Activated CD8-positive, alpha-beta T cell treated with anti-CD3 and anti-CD28 coated beads for 36 hours (primary cell): ENCODE measurements at regions of chr2 and their contacts with region 1.

Region 1: DNA sequence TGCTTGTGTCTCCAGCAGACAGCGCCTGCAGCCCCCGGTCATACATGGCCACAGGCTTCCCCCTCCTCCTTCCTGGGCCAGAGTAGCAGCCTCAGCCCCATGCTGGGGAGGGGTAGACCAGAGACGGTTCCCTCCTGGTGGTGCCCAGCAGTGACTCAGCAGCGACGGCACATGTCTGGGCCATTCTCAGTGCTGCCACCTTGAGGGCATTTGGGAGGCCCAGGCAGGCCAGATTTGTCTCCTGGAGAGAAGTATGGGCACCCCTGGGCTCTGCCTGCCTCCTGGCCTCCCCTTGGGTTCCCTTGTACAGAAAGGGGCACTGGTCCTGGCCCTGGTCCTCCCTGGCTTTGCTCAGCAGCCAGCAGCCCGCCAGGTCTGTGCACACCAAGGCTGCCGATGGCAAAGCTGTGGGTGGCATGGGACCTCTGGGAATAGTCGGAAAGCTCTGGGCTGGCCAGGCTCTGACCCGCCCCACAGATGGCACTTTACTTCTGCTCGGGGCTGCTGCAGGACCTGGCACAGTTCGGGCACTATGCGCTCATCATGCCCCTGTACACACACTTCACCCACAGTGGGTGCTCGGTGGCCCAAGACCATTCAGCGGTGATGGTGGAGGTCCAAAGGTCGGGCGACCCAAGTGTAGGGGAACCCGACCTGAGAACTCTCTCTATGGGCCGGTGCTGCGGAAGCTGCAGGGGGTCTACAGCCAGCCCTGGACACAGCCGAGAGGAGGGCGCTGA is 11.4 kb upstream of the ALPI start:
- DNase-seq: peak; percentile 85
- ATAC-seq: peak; percentile 74
- H3K4me3 Mint-ChIP-seq: no peak overlapping the region
- H3K27ac Mint-ChIP-seq: no peak overlapping the region
- H3K4me1 Mint-ChIP-seq: peaks cover 17% of the 10 kb centered on the region
- H3K27me3 Mint-ChIP-seq: peaks cover 1% of the 10 kb centered on the region
- CTCF ChIP-seq: peak; percentile 61

Region 2: DNA sequence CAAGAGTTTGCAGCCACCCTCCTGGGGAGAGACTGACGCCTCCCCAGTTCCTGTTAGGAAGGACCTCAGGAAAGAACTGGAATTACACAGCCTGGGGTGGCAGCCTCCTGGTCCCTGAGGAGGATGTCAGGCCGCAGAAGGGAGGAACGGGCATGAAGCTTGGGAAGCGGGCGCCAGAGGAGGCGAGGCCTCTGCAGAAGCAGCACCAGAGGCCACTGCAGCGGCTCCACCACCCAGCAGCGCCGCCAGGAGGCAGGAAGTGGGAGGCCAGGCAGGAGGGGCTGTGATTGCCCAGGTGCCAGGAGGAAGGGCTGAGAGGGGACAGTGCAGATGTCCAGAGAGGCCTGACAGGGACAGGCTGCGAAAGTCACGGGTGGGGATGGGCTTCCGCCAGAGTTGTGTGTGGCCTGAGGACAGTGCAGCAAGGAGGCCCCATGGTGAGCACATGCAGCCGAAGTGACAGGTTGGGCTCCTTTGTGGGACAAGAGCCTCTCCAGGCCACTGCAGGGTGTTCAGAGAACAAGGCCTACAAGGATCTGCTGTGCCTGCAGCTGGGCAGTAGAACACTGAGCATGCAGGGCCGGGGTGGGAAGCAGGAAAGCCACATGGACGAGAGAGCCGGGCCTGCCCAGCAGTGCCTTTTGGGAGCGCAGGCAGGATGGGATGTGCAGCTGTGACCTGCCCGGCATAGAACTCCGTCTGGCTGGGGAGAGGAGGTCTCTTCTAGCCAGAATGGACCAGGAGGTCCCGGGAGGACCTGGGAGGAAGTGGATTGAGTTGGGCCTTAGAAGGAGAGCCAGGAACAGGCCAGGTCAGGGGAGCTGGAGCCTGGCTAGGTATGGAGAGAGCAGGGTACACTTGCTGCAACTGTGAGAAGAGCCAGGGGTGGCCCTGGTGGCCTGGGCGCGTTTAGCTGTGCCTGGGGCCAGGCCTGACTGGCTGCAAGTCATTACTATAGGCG is 105.2 kb before region 1 on chr2:
- CTCF ChIA-PET with region 1: interaction called, 6 read pairs
- POLR2A ChIA-PET with region 1: no interaction called
- intact Hi-C with region 1: loop called (anchors 5 kb)
- DNase-seq: no peak
- ATAC-seq: no peak
- H3K4me3 Mint-ChIP-seq: no peak overlapping the region
- H3K27ac Mint-ChIP-seq: no peak overlapping the region
- H3K4me1 Mint-ChIP-seq: no peaks in the 10 kb centered on the region
- H3K27me3 Mint-ChIP-seq: no peaks in the 10 kb centered on the region
- CTCF ChIP-seq: no peak

Region 3: DNA sequence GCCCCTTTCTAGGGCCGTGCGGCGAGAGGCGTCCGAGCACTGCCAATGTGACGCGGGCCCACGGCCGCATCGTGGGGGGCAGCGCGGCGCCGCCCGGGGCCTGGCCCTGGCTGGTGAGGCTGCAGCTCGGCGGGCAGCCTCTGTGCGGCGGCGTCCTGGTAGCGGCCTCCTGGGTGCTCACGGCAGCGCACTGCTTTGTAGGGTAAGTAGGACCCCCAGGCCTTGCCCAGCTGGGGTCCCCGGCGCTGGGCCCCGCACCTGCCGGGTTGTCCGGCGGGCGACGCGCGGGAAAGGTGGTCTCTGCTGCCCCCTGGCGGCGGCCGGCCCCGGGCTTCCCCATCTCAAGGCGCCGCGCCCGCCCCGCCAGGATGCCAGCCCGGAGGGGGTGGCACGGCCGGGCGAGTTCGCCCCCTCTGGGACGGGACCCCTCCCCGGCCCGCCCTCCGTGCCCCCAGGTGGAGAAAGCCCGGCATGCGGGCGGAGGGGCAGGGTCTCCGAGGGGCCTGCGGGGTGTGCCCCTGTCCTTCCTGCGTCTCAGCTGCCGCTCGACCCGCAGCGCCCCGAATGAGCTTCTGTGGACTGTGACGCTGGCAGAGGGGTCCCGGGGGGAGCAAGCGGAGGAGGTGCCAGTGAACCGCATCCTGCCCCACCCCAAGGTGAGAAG is 77.5 kb after region 1 on chr2:
- CTCF ChIA-PET with region 1: interaction called, 18 read pairs
- POLR2A ChIA-PET with region 1: no interaction called
- intact Hi-C with region 1: loop called (anchors 5 kb)
- DNase-seq: peak; percentile 74
- ATAC-seq: peak; percentile 58
- H3K4me3 Mint-ChIP-seq: no peak overlapping the region
- H3K27ac Mint-ChIP-seq: no peak overlapping the region
- H3K4me1 Mint-ChIP-seq: peaks cover 6% of the 10 kb centered on the region
- H3K27me3 Mint-ChIP-seq: peaks cover 37% of the 10 kb centered on the region
- CTCF ChIP-seq: peak; percentile 94